ENCODE measurements at regions of chr10 and their contacts with region 1.

Region 1: GRCh38 chr10:102484021-102484420 is 18.5 kb downstream of the ACTR1A start:
- DNase-seq: no peak
- H3K4me3 ChIP-seq: no peak overlapping the region
- H3K27ac ChIP-seq: no peak overlapping the region
- H3K4me1 ChIP-seq: no peaks in the 10 kb centered on the region
- H3K27me3 ChIP-seq: no peaks in the 10 kb centered on the region
- CTCF ChIP-seq: no peak

Region 2: DNA sequence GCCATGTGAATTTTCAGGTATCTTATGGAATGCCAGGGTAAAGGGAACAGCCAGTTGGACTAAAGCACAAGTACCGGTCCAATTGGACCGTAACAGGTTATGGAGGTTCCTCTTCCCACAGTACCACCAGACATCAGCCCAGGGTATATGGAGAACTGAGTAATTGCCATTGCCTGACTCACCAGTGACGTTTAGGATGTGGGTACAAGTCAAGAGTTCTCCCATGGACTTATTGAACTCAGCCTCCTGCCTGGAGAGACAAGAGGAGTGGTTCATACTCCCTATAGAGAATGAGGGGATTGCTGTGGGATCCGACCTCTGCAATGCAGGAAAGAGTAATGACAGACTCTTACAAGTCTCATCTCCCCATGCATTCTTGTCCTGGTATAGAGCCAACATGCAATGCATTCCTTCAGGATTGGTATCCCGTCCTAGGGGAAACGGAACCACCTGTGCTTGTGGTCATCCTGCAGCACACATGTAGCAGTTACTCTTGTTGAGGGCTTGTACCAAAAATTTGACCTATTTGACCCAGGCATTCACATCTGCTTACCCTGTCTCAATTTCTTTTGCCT is 288.6 kb before region 1 on chr10:
- intact Hi-C with region 1: no loop called
- DNase-seq: no peak
- H3K4me3 ChIP-seq: no peak overlapping the region
- H3K27ac ChIP-seq: no peak overlapping the region
- H3K4me1 ChIP-seq: no peaks in the 10 kb centered on the region
- H3K27me3 ChIP-seq: no peaks in the 10 kb centered on the region
- CTCF ChIP-seq: no peak

Region 3: DNA sequence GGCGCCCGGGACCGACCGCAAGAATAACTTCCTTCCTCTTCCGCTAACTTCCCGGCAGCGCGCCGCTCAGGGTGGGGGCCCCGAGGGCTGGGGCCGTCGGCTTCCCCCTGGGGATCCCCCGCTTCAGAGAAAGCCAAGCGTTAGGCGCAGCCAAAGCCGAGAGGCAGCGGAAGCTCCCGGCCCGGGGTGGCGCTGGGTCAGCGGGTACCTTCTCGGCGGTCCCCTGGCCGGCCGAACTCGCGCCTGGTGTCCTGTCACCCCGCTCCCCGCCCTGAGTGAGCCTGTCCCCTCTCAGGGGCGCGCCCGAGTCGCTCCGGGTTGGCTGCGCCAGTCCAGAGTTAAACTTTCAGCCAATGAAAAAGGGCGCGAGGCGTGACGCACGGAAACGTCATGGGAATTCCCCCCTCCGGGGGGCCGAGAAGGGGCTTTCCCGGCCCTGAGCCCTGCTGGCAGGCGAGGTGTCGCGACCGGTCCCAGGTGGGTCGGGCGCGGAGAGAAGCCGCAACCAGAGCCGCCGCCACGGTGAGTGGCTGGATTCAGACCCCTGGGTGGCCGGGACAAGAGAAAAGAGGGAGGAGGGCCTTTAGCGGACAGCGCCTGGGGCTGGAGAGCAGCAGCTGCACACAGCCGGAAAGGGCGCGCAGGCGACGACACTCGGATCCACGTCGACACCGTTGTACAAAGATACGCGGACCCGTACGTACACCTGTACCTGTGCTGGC is 89.8 kb before region 1 on chr10:
- intact Hi-C with region 1: loop called (anchors 5 kb)
- DNase-seq: peak; percentile 97
- H3K4me3 ChIP-seq: peak overlapping the region; percentile 73
- H3K27ac ChIP-seq: peak overlapping the region; percentile 98
- H3K4me1 ChIP-seq: peaks cover 11% of the 10 kb centered on the region
- H3K27me3 ChIP-seq: no peaks in the 10 kb centered on the region
- CTCF ChIP-seq: peak; percentile 97

Region 4: GRCh38 chr10:102420810-102421644 is 63.0 kb before region 1 on chr10 and contains the start of gene FBXL15:
- intact Hi-C with region 1: loop called (anchors 5 kb)
- DNase-seq: peak; percentile 97
- H3K4me3 ChIP-seq: peak within 1 kb of the TSS; percentile 71
- H3K27ac ChIP-seq: peak within 1 kb of the TSS; percentile 88
- H3K4me1 ChIP-seq: peaks cover 15% of the 10 kb centered on the region
- H3K27me3 ChIP-seq: no peaks in the 10 kb centered on the region
- CTCF ChIP-seq: no peak
- total RNA-seq, gene FBXL15: 23.7 to 37.3 TPM

Region 5: DNA sequence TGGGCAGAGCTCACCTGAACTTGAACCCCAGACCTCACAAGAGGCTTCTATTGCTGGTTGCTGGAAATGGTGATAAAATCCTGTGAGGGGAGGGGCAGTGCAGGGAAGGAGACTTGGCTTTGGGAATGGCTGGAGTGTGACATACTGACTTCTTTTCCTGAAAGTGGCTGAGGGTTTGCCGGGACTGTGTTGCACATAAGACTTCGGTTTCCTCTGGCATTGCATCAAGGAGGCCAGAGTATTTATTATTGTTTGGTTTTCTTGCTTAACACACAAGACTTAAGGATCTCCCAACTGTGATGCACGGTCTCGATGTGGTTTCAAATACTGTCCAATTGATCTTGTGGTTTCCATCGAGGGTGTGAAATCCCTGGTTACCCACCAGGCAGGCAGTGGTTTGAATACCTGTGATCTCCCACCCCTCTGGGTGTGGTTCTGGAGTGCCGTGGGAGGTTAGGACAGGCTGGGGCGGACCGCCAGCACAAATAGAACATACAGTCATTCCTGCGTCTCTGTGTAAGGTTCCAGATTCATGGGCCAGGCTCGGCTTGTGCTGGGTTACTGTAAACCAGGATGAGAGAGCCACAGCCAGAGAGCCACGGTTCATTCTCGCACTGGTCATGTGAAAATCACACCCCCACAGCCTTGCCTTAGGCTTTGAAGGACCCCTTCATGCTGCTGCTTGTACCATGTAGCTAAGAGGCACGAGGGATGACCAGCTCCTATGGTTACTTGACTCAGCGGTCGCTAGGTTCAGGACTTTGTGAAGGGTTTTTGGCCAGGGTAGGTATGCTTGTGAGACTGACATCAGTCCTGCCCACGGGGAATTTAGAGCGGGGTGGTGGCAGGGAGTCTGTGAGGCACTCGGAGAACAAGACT is 298.9 kb after region 1 on chr10:
- intact Hi-C with region 1: no loop called
- DNase-seq: peak; percentile 28
- H3K4me3 ChIP-seq: no peak overlapping the region
- H3K27ac ChIP-seq: peak overlapping the region; percentile 68
- H3K4me1 ChIP-seq: no peaks in the 10 kb centered on the region
- H3K27me3 ChIP-seq: no peaks in the 10 kb centered on the region
- CTCF ChIP-seq: no peak